ENCODE measurements at regions of chr5 and their contacts with region 1.

Region 1: GRCh38 chr5:43484106-43484849 is 613 bp upstream of the TMEM267 start:
- DNase-seq: peak; percentile 88
- H3K4me3 ChIP-seq: peak overlapping the region; percentile 57 to 97 (median 64)
- H3K27ac ChIP-seq: peak overlapping the region; percentile 77
- H3K4me1 ChIP-seq: peaks cover 14% of the 10 kb centered on the region
- H3K27me3 ChIP-seq: no peaks in the 10 kb centered on the region
- CTCF ChIP-seq: peak; percentile 63 to 82
- POLR2A ChIP-seq: no peak

Region 2: DNA sequence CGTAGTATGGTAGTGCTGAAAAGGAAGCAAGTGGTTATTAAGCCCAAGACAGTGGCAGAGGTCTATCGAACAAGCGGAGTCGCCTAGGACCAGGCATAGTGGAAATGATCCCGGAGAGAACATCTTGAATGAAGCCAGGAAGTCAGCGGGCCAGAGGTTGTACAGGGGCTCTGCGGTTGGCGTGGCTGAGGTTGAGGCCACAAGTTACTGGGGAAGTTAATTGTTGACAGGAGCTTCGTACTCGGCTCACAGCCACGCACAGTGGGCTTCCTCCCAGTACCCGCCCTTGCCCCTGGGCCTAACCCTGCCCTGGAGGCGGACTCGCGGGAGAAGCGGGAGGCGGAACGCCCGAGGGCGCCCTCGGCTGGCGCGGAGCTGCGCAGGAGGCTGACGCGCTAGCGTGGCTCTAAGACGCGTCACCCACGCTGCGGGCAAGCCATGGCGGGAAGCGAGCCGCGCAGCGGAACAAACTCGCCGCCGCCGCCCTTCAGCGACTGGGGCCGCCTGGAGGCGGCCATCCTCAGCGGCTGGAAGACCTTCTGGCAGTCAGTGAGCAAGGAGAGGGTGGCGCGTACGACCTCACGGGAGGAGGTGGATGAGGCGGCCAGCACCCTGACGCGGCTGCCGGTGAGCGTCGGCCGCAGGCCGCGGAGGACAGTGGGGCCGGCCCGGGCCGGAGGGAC is 1559.3 kb before region 1 on chr5 and contains the start of gene FBXO4:
- CTCF ChIA-PET with region 1: no interaction called
- POLR2A ChIA-PET with region 1: no interaction called
- dilution Hi-C with region 1: no loop called
- intact Hi-C with region 1: loop called (anchors 10 kb)
- DNase-seq: peak; percentile 88
- H3K4me3 ChIP-seq: peak within 1 kb of the TSS; percentile 27 to 77 (median 66)
- H3K27ac ChIP-seq: peak within 1 kb of the TSS; percentile 92
- H3K4me1 ChIP-seq: peaks cover 22% of the 10 kb centered on the region
- H3K27me3 ChIP-seq: no peaks in the 10 kb centered on the region
- CTCF ChIP-seq: peak; percentile 50 to 74
- POLR2A ChIP-seq: peak; percentile 86
- total RNA-seq, gene FBXO4: 7.0 and 7.7 TPM in 2 replicates

Region 3: DNA sequence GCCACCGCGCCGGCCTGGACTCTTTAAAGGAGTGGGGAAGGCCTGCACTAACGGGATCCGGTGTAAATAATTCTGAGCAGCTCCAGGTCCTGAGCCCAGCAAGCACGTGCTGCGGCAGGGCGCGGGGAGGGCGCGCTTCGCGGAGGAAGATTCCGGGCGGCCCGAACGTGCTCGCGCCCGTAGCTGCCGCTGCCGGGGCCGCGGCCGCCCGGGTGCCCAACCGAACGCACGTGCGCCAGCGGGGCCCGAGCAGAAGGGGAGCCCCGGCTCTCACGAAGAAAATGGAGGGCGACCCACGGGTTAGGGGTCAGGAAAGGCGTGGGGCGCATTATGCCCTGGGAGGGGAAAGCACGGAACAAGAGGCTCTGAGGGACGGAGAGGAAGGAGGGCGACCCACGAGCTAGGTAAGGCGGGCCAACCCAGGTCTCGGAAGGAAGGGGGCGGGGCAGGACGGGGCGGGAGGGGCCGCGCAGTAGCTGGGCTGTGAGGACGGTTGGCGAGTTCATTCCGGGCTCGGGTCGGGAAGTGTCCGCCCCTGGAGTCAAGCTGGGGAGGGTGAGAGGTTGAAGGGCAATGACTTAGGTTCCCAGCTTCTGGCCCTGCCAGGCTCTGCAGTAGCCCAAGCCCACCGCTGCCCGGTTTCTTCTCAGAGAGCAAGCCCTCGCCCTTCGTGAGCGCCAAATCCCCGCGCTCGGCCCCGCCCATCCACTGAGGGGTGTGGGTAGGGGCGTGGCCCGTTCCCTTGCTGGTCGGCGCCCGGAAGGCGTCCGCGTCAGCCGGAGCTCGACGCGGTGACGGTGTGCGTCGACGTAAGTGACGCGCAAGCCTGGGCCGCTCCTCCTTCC is 363.3 kb before region 1 on chr5 and contains the start of gene ZNF131:
- CTCF ChIA-PET with region 1: interaction called, 5 read pairs
- POLR2A ChIA-PET with region 1: interaction called, 11 read pairs
- dilution Hi-C with region 1: no loop called
- intact Hi-C with region 1: loop called (anchors 2 kb)
- DNase-seq: peak; percentile 97
- H3K4me3 ChIP-seq: peak within 1 kb of the TSS; percentile 73 to 90 (median 79)
- H3K27ac ChIP-seq: peak within 1 kb of the TSS; percentile 81
- H3K4me1 ChIP-seq: peaks cover 17% of the 10 kb centered on the region
- H3K27me3 ChIP-seq: no peaks in the 10 kb centered on the region
- CTCF ChIP-seq: no peak
- POLR2A ChIP-seq: peak; percentile 94
- total RNA-seq, gene ZNF131: 30.1 and 31.2 TPM in 2 replicates

Region 4: DNA sequence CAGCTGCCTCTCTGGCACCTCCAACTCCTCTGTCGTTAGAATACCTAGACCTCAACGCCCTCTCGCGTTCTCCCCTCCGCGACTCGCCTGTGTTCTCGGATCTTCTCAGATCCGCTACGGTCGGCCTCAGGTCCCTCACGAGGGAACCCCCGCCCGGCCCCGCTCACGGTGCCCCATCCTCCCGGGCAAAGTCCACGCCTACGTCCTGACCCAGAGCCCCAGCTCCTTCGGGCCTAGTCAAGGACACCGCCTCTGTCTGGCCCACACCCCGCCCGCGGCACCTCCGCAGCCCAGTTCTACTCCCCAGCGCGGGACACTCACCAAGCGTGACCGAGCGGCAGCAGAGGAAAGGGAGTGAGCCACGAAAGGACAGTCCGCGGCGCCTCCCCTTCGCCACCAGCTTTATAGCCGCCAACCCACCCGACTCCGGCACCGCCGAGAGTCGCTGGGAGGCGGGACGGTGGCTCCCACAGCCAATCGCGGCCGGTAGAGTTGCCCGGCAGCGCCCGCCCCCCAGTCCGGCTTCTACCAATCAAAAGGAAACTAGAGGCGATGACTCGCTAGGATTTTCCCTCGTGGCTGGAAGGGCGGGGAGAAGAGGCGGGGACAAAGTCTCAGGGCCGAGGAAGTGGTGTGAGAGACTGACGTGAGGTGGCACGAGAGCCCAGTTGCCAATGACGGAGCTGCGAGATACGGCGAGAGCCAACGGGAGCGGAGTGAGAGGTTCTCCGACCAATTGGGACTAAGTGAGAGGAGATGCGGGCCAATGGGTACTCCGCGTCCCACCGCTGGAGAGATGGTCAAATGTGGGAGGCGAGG is 171.0 kb before region 1 on chr5 and contains the start of gene HMGCS1:
- CTCF ChIA-PET with region 1: interaction called, 28 read pairs
- POLR2A ChIA-PET with region 1: interaction called, 12 read pairs
- dilution Hi-C with region 1: no loop called
- intact Hi-C with region 1: loop called (anchors 1 kb)
- DNase-seq: peak; percentile 100
- H3K4me3 ChIP-seq: peak within 1 kb of the TSS; percentile 73 to 91 (median 75)
- H3K27ac ChIP-seq: peak within 1 kb of the TSS; percentile 43
- H3K4me1 ChIP-seq: peaks cover 35% of the 10 kb centered on the region
- H3K27me3 ChIP-seq: no peaks in the 10 kb centered on the region
- CTCF ChIP-seq: peak in 1 of 2 donors; percentile 5
- POLR2A ChIP-seq: peak; percentile 57
- total RNA-seq, gene HMGCS1: 133 and 149 TPM in 2 replicates

Region 5: GRCh38 chr5:43469702-43470366 is 14.4 kb before region 1 on chr5:
- CTCF ChIA-PET with region 1: interaction called, 11 read pairs
- POLR2A ChIA-PET with region 1: no interaction called
- dilution Hi-C with region 1: no loop called
- intact Hi-C with region 1: no loop called
- DNase-seq: no peak
- H3K4me3 ChIP-seq: no peak overlapping the region
- H3K27ac ChIP-seq: no peak overlapping the region
- H3K4me1 ChIP-seq: no peaks in the 10 kb centered on the region
- H3K27me3 ChIP-seq: no peaks in the 10 kb centered on the region
- CTCF ChIP-seq: no peak
- POLR2A ChIP-seq: no peak

Region 6: DNA sequence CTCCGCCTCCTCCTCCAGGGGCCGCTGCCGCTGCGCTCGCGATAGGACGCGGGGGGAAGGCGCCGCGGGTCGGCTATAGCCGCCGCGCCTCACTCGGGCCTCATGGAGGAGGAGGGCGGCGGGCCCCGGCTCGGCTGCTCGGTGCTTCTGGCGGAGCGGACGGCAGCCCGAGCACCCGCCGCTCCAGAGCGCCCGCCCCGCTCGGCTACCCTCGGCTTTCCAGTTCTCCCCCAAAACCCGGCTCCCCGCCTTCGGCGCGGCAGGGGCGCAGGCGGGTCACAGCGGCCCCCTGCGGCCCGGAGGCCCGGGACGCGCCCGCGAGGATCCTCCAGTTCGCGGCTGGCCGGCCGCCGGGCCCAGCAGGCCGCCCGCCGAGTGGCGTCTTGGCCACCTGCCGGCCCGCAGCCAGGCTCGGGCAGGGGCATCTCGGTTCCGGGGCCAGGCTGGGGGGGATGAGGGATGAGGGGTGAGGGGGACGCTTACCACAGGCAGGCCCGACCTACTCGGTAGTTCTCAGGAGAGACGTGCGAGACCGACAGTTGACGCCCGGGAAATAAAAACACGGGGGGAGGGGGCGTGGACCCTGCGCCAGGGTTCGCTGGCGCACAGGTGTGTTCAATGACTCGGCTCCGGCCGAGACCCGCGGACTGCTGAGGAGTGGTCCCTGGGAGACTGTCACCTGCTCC is 72.7 kb after region 1 on chr5 and contains the start of gene PAIP1:
- CTCF ChIA-PET with region 1: interaction called, 13 read pairs
- POLR2A ChIA-PET with region 1: no interaction called
- dilution Hi-C with region 1: no loop called
- intact Hi-C with region 1: loop called (anchors 1 kb)
- DNase-seq: peak; percentile 86
- H3K4me3 ChIP-seq: peak within 1 kb of the TSS; percentile 91 to 98 (median 96)
- H3K27ac ChIP-seq: peak within 1 kb of the TSS; percentile 73
- H3K4me1 ChIP-seq: peaks cover 25% of the 10 kb centered on the region
- H3K27me3 ChIP-seq: peaks cover 1 to 3% of the 10 kb centered on the region in 2 experiments
- CTCF ChIP-seq: peak; percentile 44 to 71
- POLR2A ChIP-seq: no peak
- total RNA-seq, gene PAIP1: 81.6 and 90.1 TPM in 2 replicates

Region 7: GRCh38 chr5:43592363-43592762 is 108.1 kb after region 1 on chr5:
- CTCF ChIA-PET with region 1: no interaction called
- POLR2A ChIA-PET with region 1: no interaction called
- dilution Hi-C with region 1: no loop called
- intact Hi-C with region 1: no loop called
- DNase-seq: no peak
- H3K4me3 ChIP-seq: no peak overlapping the region
- H3K27ac ChIP-seq: no peak overlapping the region
- H3K4me1 ChIP-seq: no peaks in the 10 kb centered on the region
- H3K27me3 ChIP-seq: no peaks in the 10 kb centered on the region
- CTCF ChIP-seq: no peak
- POLR2A ChIP-seq: no peak